Posterior vena cava (tissue), 2 donors: ENCODE measurements at regions of chr4 and their contacts with region 1.

Region 1: DNA sequence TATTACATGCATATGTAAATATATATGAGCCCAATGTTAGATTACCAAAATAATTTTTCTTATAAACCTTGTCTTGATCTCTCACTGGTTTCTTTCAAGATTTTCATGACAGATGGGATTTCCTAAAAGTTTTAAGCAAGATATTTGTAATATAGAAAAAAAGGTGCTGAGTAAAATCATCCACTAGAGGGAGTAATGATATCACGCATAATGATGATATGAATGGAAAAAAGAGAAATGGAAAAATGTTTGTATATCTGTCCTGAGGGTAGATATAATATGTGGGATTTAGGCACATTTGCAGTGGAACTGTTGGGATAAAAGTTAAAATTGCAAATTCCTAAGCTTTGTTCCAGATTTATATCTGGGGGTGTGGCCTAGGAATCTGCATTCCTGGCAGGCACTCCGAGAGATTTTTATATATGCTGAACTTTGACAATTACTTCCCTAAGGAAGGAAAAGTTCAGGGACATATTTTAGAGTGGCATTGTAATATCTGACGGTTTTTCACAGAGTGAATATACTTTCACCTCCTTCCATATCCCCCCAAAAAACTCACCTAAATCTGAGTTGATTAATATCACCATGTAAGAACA is 60.5 kb downstream of the TMA16 start:
- DNase-seq: no peak

Region 2: GRCh38 chr4:162497564-162498167 is 1057.3 kb before region 1 on chr4:
- intact Hi-C with region 1: loop called in 1 of 2 experiments (anchors 10 kb)
- DNase-seq: no peak

Region 3: GRCh38 chr4:163121689-163122088 is 433.3 kb before region 1 on chr4:
- intact Hi-C with region 1: no loop called
- DNase-seq: no peak

Region 4: DNA sequence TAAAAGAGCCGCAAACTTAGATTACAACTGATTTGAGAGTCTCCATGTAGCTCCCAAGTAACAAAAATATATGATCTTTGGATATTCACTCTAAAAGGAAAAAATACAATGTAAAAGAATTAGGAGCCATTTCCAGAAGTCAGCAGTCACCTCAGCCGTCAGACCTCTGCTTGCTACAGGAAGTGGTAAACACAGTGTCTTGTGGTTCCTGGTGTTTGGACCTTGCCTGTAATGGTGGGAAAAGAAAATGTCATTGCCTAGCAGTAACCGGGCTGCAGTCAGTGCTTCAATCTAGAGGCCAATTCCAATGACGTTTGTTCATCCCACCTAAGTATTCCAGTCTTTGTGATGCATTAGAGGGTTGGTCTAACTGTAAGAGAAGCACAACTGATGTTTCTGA is 1170.1 kb after region 1 on chr4:
- intact Hi-C with region 1: loop called in 1 of 2 experiments (anchors 10 kb)
- DNase-seq: no peak